ENCODE measurements at regions of chr20 and their contacts with region 1.

Region 1: DNA sequence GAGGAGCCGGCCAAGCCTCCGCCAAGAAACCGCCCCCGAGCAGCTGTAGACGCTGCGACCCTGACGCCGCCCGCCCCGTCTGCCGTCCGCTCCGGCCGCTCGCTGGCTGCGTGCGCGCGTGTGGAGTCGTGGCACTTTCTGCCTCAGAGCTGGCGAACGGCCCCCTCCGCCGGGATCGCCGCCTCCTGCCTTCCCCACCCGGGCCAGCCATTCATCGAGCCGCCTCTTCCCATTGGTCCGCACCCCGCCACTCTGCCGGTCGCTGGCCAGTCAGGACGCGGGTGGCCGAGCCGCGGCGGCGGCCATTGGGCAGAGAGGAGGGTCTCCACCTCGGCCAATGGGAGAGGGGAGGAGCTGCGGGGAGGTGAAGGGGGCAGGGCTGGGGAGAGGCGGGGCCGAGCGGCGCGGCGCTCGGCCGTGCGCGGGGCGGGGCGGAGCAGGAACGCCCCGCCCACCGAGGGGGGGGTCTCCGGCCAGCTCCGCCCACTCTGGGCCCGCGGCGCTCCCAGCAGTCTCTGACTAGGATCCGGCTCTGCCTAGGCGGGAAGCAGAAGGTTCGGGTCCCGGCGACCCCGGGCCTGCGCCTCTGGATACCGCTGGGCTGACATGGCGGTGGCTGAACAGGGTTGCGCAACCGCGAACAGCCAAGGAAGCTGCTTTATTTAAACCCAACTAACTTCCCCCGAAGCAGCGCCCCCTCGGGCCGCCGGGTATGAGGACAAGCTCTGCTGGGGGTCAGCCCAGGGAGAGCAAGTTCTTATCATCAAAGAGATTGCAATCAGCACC is at the start of gene RRBP1:
- DNase-seq: peak; percentile 99
- H3K4me3 ChIP-seq: peak within 1 kb of the TSS; percentile 79 to 94 (median 86)
- H3K27ac ChIP-seq: peak within 1 kb of the TSS; percentile 87 to 96 (median 96)
- H3K4me1 ChIP-seq: peaks cover 8 to 31% (median 26%) of the 10 kb centered on the region in 4 donors
- H3K27me3 ChIP-seq: no peaks in the 10 kb centered on the region
- CTCF ChIP-seq: peak; percentile 41 to 71 (median 54)
- EP300 ChIP-seq: no peak
- POLR2A ChIP-seq: peak; percentile 67
- total RNA-seq, gene RRBP1: 61.5 to 86.6 (median 65.4) TPM

Region 2: GRCh38 chr20:17761604-17762003 is 79.3 kb after region 1 on chr20:
- intact Hi-C with region 1: no loop called
- DNase-seq: no peak
- H3K4me3 ChIP-seq: no peak overlapping the region
- H3K27ac ChIP-seq: no peak overlapping the region
- H3K4me1 ChIP-seq: no peaks in the 10 kb centered on the region
- H3K27me3 ChIP-seq: no peaks in the 10 kb centered on the region
- CTCF ChIP-seq: no peak
- EP300 ChIP-seq: no peak
- POLR2A ChIP-seq: no peak

Region 3: GRCh38 chr20:17806739-17807441 is 124.6 kb after region 1 on chr20:
- intact Hi-C with region 1: loop called (anchors 10 kb)
- DNase-seq: no peak
- H3K4me3 ChIP-seq: peak overlapping the region in 2 of 4 donors; percentile 11 to 14
- H3K27ac ChIP-seq: peak overlapping the region; percentile 69 to 82 (median 77)
- H3K4me1 ChIP-seq: peaks cover 41 to 52% (median 47%) of the 10 kb centered on the region in 4 donors
- H3K27me3 ChIP-seq: no peaks in the 10 kb centered on the region
- CTCF ChIP-seq: no peak
- EP300 ChIP-seq: no peak
- POLR2A ChIP-seq: no peak

Region 4: GRCh38 chr20:17904027-17904426 is 221.7 kb after region 1 on chr20:
- intact Hi-C with region 1: loop called (anchors 2 kb)
- DNase-seq: no peak
- H3K4me3 ChIP-seq: no peak overlapping the region
- H3K27ac ChIP-seq: no peak overlapping the region
- H3K4me1 ChIP-seq: no peaks in the 10 kb centered on the region
- H3K27me3 ChIP-seq: no peaks in the 10 kb centered on the region
- CTCF ChIP-seq: no peak
- EP300 ChIP-seq: no peak
- POLR2A ChIP-seq: no peak

Region 5: DNA sequence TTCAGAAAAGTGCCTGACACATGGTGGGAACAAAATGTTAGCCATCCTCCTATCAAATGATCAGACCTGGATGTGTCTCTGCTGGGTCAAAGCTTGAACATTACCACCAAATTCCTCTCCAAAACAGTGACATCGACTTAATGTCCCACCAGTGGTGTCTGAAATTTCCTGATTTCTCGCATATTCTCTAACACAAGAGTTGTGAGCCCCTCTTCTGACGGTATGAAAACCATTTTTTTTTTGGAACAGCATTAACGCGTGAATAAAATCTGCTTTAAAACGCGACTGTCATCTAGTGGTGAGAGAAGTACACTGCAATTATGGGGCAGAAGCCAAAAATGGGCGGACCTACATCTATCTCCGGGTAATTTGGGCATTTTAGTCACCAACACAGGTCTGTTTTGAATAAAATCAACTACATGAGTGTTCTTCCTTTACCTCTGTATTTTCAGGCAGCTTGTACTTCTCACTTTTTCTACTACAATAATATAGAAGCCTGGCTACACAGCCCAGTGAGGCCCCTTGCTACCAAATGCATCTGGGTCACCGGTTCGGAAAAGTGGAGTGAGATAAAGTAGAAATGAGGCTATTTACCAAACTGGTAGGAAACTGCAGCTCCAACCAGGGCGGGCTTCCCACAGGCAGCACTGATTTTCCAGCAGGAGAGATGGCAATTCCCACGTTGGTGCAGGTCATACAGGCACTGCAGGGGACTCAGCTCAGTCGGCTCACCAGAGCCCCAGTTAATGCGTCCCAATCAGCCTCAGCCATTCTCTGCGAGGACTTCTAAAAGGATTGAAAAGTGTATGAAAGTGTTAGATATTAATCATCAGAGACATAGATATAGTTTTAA is 313.9 kb after region 1 on chr20:
- intact Hi-C with region 1: loop called (anchors 2 kb)
- DNase-seq: no peak
- H3K4me3 ChIP-seq: no peak overlapping the region
- H3K27ac ChIP-seq: no peak overlapping the region
- H3K4me1 ChIP-seq: peaks cover 0 to 16% (median 15%) of the 10 kb centered on the region in 4 donors
- H3K27me3 ChIP-seq: no peaks in the 10 kb centered on the region
- CTCF ChIP-seq: peak in 2 of 3 experiments; percentile 92 to 97
- EP300 ChIP-seq: no peak
- POLR2A ChIP-seq: no peak

Region 6: GRCh38 chr20:18543932-18544331 is 861.6 kb after region 1 on chr20:
- intact Hi-C with region 1: no loop called
- DNase-seq: no peak
- H3K4me3 ChIP-seq: no peak overlapping the region
- H3K27ac ChIP-seq: no peak overlapping the region
- H3K4me1 ChIP-seq: no peaks in the 10 kb centered on the region
- H3K27me3 ChIP-seq: no peaks in the 10 kb centered on the region
- CTCF ChIP-seq: no peak
- EP300 ChIP-seq: no peak
- POLR2A ChIP-seq: no peak

Measured in esophagus muscularis mucosa (tissue), 4 donors.